Activated naive CD4-positive, alpha-beta T cell treated with anti-CD3 and anti-CD28 coated beads for 36 hours (primary cell): ENCODE measurements at regions of chr18 and their contacts with region 1.

Region 1: DNA sequence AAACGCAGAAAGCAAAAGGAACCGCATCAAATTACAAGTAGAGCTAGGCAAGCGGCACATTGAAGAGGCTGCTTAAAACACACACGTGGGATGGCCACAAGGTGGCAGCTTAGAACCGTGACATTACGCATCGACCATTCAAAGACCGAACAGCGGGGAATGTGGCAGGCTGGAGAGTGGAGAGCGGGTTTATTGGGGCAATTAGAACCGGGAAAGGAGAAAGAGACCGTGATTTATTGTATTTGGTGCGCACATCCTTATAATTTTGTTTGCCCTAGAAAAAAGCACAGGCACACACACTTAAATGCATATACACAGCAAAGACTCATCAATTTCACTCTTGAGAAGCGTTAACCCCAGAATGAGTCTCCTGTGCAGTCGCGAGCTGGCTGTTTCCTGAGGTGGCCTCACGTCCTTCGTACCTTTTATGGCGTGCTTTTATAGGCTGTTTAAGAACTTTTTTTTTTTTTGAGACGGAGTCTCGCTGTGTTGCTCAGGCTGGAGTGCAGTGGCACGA is 31.7 kb upstream of the MEP1B start:
- DNase-seq: peak; percentile 80
- H3K4me3 Mint-ChIP-seq: peak overlapping the region; percentile 49
- H3K27ac Mint-ChIP-seq: no peak overlapping the region
- H3K4me1 Mint-ChIP-seq: peaks cover 5% of the 10 kb centered on the region
- H3K27me3 Mint-ChIP-seq: no peaks in the 10 kb centered on the region

Region 2: GRCh38 chr18:32271672-32272208 is 113.6 kb after region 1 on chr18:
- CTCF ChIA-PET with region 1: interaction called, 7 read pairs
- intact Hi-C with region 1: loop called (anchors 1 kb)
- DNase-seq: peak; percentile 44
- H3K4me3 Mint-ChIP-seq: no peak overlapping the region
- H3K27ac Mint-ChIP-seq: no peak overlapping the region
- H3K4me1 Mint-ChIP-seq: no peaks in the 10 kb centered on the region
- H3K27me3 Mint-ChIP-seq: peaks cover 11% of the 10 kb centered on the region

Region 3: GRCh38 chr18:32470713-32471633 is 312.8 kb after region 1 on chr18 and contains the start of gene GAREM1:
- CTCF ChIA-PET with region 1: interaction called, 9 read pairs
- intact Hi-C with region 1: loop called (anchors 1 kb)
- DNase-seq: peak; percentile 91
- H3K4me3 Mint-ChIP-seq: peak within 1 kb of the TSS; percentile 77
- H3K27ac Mint-ChIP-seq: no peak within 1 kb of the TSS
- H3K4me1 Mint-ChIP-seq: peaks cover 28% of the 10 kb centered on the region
- H3K27me3 Mint-ChIP-seq: peaks cover 36% of the 10 kb centered on the region
- total RNA-seq, gene GAREM1: 0.31 to 0.35 TPM

Region 4: DNA sequence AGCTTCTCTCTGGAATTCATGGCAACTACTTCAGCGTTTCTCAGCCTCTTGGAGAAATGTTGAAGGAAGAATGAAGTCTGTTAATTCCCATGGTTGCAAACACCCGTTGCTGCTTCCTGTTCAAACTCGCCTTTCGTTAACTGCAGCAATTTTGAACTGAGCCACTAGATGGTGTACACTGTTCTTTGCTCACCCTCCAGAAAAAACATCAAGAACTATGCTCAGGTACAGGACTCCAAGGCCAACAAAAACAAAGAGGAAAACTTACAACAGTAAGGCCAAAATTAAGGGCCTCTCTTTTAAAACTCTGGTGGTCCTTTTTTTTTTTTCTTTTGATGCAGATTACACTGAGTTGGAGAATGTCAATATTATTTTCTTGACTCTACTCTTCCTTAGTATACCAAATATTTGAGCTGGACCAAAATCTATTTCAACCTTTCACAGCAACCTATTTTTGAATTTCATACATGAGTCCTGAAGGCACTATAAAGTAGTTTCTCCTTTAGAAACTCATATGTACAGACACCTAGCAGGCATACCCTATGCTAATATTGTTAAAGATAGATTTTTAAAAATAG is 556.5 kb after region 1 on chr18:
- CTCF ChIA-PET with region 1: no interaction called
- intact Hi-C with region 1: loop called (anchors 5 kb)
- DNase-seq: peak; percentile 44
- H3K4me3 Mint-ChIP-seq: no peak overlapping the region
- H3K27ac Mint-ChIP-seq: no peak overlapping the region
- H3K4me1 Mint-ChIP-seq: peaks cover 1% of the 10 kb centered on the region
- H3K27me3 Mint-ChIP-seq: no peaks in the 10 kb centered on the region